Activated CD4-positive, alpha-beta memory T cell treated with anti-CD3 and anti-CD28 coated beads, Interleukin-2, amount 10 ng/mL, durations not matched to agents 7 days and 5 days (primary cell): ENCODE measurements at regions of chr10 and their contacts with region 1.

Region 1: GRCh38 chr10:95693668-95694534 is at the start of gene TCTN3:
- DNase-seq: peak; percentile 97
- H3K4me3 Mint-ChIP-seq: peak within 1 kb of the TSS; percentile 91
- H3K27ac Mint-ChIP-seq: peak within 1 kb of the TSS; percentile 84
- H3K4me1 Mint-ChIP-seq: peaks cover 44% of the 10 kb centered on the region
- H3K27me3 Mint-ChIP-seq: no peaks in the 10 kb centered on the region
- total RNA-seq, gene TCTN3: 26.2 to 28.5 TPM

Region 2: GRCh38 chr10:95656291-95657164 is 37.4 kb before region 1 on chr10 and contains the start of gene ALDH18A1:
- CTCF ChIA-PET with region 1: interaction called, 16 read pairs
- POLR2A ChIA-PET with region 1: interaction called, 4 read pairs
- DNase-seq: peak; percentile 92
- H3K4me3 Mint-ChIP-seq: peak within 1 kb of the TSS; percentile 99
- H3K27ac Mint-ChIP-seq: peak within 1 kb of the TSS; percentile 71
- H3K4me1 Mint-ChIP-seq: peaks cover 19% of the 10 kb centered on the region
- H3K27me3 Mint-ChIP-seq: no peaks in the 10 kb centered on the region
- total RNA-seq, gene ALDH18A1: 42.2 to 44.7 TPM

Region 3: DNA sequence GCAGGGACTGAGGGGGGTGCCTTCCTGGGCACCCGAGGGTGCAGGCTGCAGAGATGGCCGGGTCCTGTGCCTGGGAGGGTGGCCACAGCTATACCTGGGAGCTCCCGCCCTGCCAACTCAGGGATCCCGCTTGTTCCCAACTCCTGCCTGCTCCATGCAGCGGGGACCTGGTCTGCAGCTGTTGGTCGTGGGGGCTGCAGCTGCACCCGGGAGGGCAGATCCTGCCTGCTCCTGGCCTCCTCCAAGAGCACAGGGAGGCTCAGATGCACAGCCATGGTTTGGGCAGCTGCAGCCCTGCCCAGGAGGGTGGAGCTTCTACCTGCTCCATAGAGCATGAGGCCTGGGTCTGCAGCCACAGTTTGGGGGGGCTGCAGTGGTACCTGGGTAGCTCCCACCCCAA is 13.1 kb after region 1 on chr10:
- CTCF ChIA-PET with region 1: interaction called, 12 read pairs
- POLR2A ChIA-PET with region 1: no interaction called
- DNase-seq: no peak
- H3K4me3 Mint-ChIP-seq: no peak overlapping the region
- H3K27ac Mint-ChIP-seq: no peak overlapping the region
- H3K4me1 Mint-ChIP-seq: no peaks in the 10 kb centered on the region
- H3K27me3 Mint-ChIP-seq: no peaks in the 10 kb centered on the region

Region 4: GRCh38 chr10:95841661-95842498 is 148.0 kb after region 1 on chr10:
- CTCF ChIA-PET with region 1: interaction called, 379 read pairs
- POLR2A ChIA-PET with region 1: interaction called, 43 read pairs
- DNase-seq: peak; percentile 45
- H3K4me3 Mint-ChIP-seq: no peak overlapping the region
- H3K27ac Mint-ChIP-seq: peak overlapping the region; percentile 67
- H3K4me1 Mint-ChIP-seq: peaks cover 63% of the 10 kb centered on the region
- H3K27me3 Mint-ChIP-seq: no peaks in the 10 kb centered on the region

Region 5: DNA sequence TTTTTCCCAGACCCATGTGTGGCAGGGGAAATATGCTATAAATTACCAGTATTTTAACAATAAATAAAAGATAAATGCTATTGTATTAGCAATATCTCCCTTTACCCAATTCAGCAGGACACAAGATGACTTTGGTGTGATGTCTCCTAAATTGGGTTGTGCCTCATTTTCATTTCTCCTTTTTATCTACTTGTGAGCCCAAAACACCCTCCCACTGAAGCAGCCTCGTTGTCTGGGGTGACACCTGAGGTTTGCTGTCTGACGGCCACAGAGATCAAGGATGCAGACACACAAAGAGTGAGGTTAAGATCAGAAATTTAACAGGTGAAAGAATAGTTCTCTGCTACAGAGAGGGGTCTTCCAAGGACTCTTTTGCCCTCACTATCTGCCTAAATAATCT is 186.8 kb after region 1 on chr10:
- CTCF ChIA-PET with region 1: interaction called, 14 read pairs
- POLR2A ChIA-PET with region 1: no interaction called
- DNase-seq: no peak
- H3K4me3 Mint-ChIP-seq: no peak overlapping the region
- H3K27ac Mint-ChIP-seq: no peak overlapping the region
- H3K4me1 Mint-ChIP-seq: peaks cover 5% of the 10 kb centered on the region
- H3K27me3 Mint-ChIP-seq: no peaks in the 10 kb centered on the region

Region 6: GRCh38 chr10:96017191-96017687 is 323.3 kb after region 1 on chr10:
- CTCF ChIA-PET with region 1: interaction called, 16 read pairs
- POLR2A ChIA-PET with region 1: no interaction called
- DNase-seq: peak; percentile 32
- H3K4me3 Mint-ChIP-seq: no peak overlapping the region
- H3K27ac Mint-ChIP-seq: no peak overlapping the region
- H3K4me1 Mint-ChIP-seq: no peaks in the 10 kb centered on the region
- H3K27me3 Mint-ChIP-seq: peaks cover 4% of the 10 kb centered on the region